Tibial artery (tissue), 4 donors: ENCODE measurements at regions of chr12 and their contacts with region 1.

Region 1: DNA sequence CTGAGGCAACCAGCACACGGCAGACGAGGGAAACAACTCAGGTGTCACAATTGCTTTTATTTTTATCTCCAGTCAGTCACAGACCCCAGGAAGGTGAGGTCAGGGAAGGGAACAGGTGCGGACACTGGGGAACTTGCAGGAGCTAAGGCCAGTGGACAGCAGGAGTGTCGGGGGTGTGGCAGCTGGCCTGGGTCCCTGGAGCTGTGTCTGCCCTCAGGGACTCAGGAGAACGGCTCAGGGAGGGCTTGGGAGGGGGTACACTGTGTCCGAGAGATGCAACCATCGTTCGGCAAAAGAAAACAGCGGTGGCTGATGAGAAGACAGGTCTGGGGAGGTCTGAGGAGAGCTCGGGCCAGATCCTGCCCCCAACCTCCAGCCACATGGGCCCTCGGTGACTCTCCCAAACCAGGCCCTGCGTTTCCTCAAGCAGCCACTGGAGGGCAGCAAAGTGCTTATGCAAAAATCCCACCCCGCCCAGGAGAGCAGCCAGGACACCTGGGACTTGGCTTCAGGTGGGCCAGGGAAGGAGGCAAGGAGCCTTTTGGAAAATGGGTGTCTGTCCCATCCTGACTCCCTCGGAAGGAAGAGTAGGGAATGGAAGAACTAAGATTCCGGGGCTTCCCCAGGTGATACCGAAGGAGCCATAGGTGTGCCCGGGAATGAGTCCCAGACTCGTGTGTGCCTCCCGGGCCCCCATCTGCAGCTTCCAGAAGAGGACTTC is 24.1 kb upstream of the BCDIN3D start:
- DNase-seq: peak; percentile 64 to 76
- H3K4me3 ChIP-seq: no peak overlapping the region
- H3K27ac ChIP-seq: no peak overlapping the region
- H3K4me1 ChIP-seq: peaks cover 0 to 18% (median 7%) of the 10 kb centered on the region in 4 donors
- H3K27me3 ChIP-seq: peaks cover 0 to 21% of the 10 kb centered on the region in 2 donors
- CTCF ChIP-seq: peak; percentile 82 to 97

Region 2: GRCh38 chr12:49707128-49707811 is 159.7 kb before region 1 on chr12 and contains the start of gene FMNL3:
- intact Hi-C with region 1: no loop called
- DNase-seq: peak; percentile 97 to 99
- H3K4me3 ChIP-seq: peak within 1 kb of the TSS; percentile 83 to 97
- H3K27ac ChIP-seq: peak within 1 kb of the TSS; percentile 94 to 97
- H3K4me1 ChIP-seq: peaks cover 0 to 37% (median 24%) of the 10 kb centered on the region in 4 donors
- H3K27me3 ChIP-seq: no peaks in the 10 kb centered on the region
- CTCF ChIP-seq: peak; percentile 93 to 100

Region 3: GRCh38 chr12:49776413-49776812 is 90.6 kb before region 1 on chr12:
- intact Hi-C with region 1: loop called (anchors 5 kb)
- DNase-seq: peak; percentile 74 to 76
- H3K4me3 ChIP-seq: no peak overlapping the region
- H3K27ac ChIP-seq: no peak overlapping the region
- H3K4me1 ChIP-seq: peaks cover 0 to 7% (median 0%) of the 10 kb centered on the region in 4 donors
- H3K27me3 ChIP-seq: peaks cover 0 to 14% of the 10 kb centered on the region in 2 donors
- CTCF ChIP-seq: peak; percentile 70 to 84

Region 4: GRCh38 chr12:49945394-49946080 is 78.5 kb after region 1 on chr12:
- intact Hi-C with region 1: loop called (anchors 10 kb)
- DNase-seq: peak; percentile 69 to 85
- H3K4me3 ChIP-seq: peak overlapping the region in 1 of 2 donors; percentile 36
- H3K27ac ChIP-seq: peak overlapping the region in 1 of 2 donors; percentile 37
- H3K4me1 ChIP-seq: peaks cover 0 to 10% (median 5%) of the 10 kb centered on the region in 4 donors
- H3K27me3 ChIP-seq: peaks cover 0 to 9% of the 10 kb centered on the region in 2 donors
- CTCF ChIP-seq: peak; percentile 68 to 87

Region 5: GRCh38 chr12:50050410-50051098 is 183.5 kb after region 1 on chr12:
- intact Hi-C with region 1: loop called (anchors 5 kb)
- DNase-seq: peak; percentile 82 to 83
- H3K4me3 ChIP-seq: peak overlapping the region; percentile 32 to 37
- H3K27ac ChIP-seq: no peak overlapping the region
- H3K4me1 ChIP-seq: peaks cover 0 to 11% (median 6%) of the 10 kb centered on the region in 4 donors
- H3K27me3 ChIP-seq: peaks cover 0 to 52% of the 10 kb centered on the region in 2 donors
- CTCF ChIP-seq: no peak